Activated B cell treated with CpG ODN at 0.5 μM for 24 hours (primary cell): ENCODE measurements at regions of chr3 and their contacts with region 1.

Region 1: GRCh38 chr3:106255870-106256248 is 387.0 kb upstream of the CBLB start:
- DNase-seq: peak; percentile 56
- ATAC-seq: peak; percentile 96
- H3K4me3 Mint-ChIP-seq: peak overlapping the region; percentile 86
- H3K27ac Mint-ChIP-seq: peak overlapping the region; percentile 86
- H3K4me1 Mint-ChIP-seq: peaks cover 42% of the 10 kb centered on the region
- H3K27me3 Mint-ChIP-seq: no peaks in the 10 kb centered on the region
- CTCF ChIP-seq: no peak

Region 2: DNA sequence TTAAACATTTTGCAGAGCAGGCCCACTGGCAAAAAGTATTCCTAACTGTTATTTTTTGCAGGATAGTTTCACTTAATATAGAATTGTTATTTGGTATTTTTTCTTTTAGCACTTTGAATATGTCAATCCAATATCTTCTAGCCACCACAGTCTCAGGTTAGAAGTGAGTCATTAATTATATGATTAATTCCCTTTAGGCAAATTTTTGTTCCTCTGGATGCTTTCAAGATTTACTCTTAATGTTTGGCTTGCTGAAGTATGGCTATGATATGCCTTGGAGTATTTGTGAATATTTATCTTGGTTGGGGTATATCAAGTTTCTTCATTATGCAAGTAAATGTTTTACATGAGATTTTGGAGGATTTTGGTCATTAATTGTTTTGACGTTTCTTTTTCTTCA is 1041.3 kb before region 1 on chr3:
- CTCF ChIA-PET with region 1: no interaction called
- POLR2A ChIA-PET with region 1: no interaction called
- intact Hi-C with region 1: no loop called
- DNase-seq: no peak
- ATAC-seq: no peak
- H3K4me3 Mint-ChIP-seq: no peak overlapping the region
- H3K27ac Mint-ChIP-seq: no peak overlapping the region
- H3K4me1 Mint-ChIP-seq: no peaks in the 10 kb centered on the region
- H3K27me3 Mint-ChIP-seq: peaks cover 5% of the 10 kb centered on the region
- CTCF ChIP-seq: no peak

Region 3: GRCh38 chr3:105722943-105723556 is 532.8 kb before region 1 on chr3:
- CTCF ChIA-PET with region 1: no interaction called
- POLR2A ChIA-PET with region 1: no interaction called
- intact Hi-C with region 1: loop called (anchors 1 kb)
- DNase-seq: no peak
- ATAC-seq: peak; percentile 93
- H3K4me3 Mint-ChIP-seq: peak overlapping the region; percentile 66
- H3K27ac Mint-ChIP-seq: peak overlapping the region; percentile 88
- H3K4me1 Mint-ChIP-seq: peaks cover 19% of the 10 kb centered on the region
- H3K27me3 Mint-ChIP-seq: no peaks in the 10 kb centered on the region
- CTCF ChIP-seq: no peak

Region 4: DNA sequence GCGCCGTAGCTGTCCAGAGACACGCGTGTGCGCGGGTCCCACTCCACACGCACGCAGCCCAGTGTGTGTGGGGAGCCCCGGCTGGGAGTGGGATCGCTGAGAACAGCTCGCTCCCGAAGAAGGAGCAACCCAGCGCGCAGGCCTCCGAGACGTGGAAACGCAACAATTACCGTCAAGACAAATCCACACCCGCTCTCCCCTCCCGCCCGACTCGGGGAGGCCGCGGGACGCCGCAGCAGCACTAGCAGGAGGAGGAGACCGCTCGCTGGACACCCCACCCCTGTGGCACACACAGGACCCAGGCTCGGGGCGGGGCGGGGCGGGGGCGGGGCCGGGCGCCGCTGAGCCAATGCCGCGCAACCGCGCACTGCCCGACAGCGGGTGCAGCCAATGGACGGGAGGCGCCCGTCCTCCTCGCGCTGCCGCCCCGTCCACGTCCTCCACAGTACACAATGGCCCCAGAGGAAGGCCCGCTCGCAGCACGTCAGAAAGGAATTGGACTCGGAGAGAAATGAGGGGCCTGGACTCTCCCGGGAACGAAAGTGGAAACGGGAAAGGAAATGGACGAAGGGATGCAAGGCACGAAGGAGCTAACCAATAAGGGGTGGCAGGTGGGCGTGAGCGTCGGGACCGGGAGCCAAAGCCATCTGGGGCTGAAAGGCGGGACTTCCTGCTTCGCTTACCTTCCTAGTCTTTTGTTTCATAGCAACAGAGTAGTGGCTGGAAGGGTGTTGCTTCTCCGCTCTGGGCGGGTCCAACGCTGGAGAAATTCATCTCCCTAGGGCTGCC is 386.9 kb before region 1 on chr3 and contains the start of gene CBLB:
- CTCF ChIA-PET with region 1: no interaction called
- POLR2A ChIA-PET with region 1: interaction called, 3 read pairs
- intact Hi-C with region 1: loop called (anchors 5 kb)
- DNase-seq: peak; percentile 78
- ATAC-seq: peak; percentile 93
- H3K4me3 Mint-ChIP-seq: peak within 1 kb of the TSS; percentile 100
- H3K27ac Mint-ChIP-seq: peak within 1 kb of the TSS; percentile 99
- H3K4me1 Mint-ChIP-seq: peaks cover 53% of the 10 kb centered on the region
- H3K27me3 Mint-ChIP-seq: no peaks in the 10 kb centered on the region
- CTCF ChIP-seq: no peak
- total RNA-seq, gene CBLB: 69.2 and 78.1 TPM in 2 replicates

Region 5: DNA sequence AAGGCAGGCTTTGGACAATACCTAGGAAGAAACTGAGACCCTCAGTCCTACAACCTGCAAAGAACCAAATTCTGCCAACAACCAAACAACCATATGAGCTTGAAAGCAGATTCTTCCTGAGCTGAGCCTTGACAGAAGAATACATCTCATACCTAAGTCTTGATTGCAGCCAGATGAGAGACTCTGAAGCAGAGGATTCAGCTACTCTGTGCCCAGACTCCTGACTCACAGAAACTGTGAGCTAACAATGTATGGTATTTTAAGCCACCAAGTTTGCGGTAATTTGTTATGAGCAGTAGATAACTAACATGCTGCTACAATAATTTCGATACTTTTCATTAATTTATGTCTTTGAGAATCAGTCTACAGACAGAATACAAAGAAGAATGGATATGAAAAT is 62.0 kb before region 1 on chr3:
- CTCF ChIA-PET with region 1: no interaction called
- POLR2A ChIA-PET with region 1: no interaction called
- intact Hi-C with region 1: no loop called
- DNase-seq: no peak
- ATAC-seq: no peak
- H3K4me3 Mint-ChIP-seq: no peak overlapping the region
- H3K27ac Mint-ChIP-seq: no peak overlapping the region
- H3K4me1 Mint-ChIP-seq: no peaks in the 10 kb centered on the region
- H3K27me3 Mint-ChIP-seq: no peaks in the 10 kb centered on the region
- CTCF ChIP-seq: no peak

Region 6: GRCh38 chr3:106206146-106206545 is 49.7 kb before region 1 on chr3:
- CTCF ChIA-PET with region 1: no interaction called
- POLR2A ChIA-PET with region 1: interaction called, 5 read pairs
- intact Hi-C with region 1: loop called (anchors 2 kb)
- DNase-seq: no peak
- ATAC-seq: peak; percentile 78
- H3K4me3 Mint-ChIP-seq: peak overlapping the region; percentile 25
- H3K27ac Mint-ChIP-seq: no peak overlapping the region
- H3K4me1 Mint-ChIP-seq: peaks cover 33% of the 10 kb centered on the region
- H3K27me3 Mint-ChIP-seq: no peaks in the 10 kb centered on the region
- CTCF ChIP-seq: no peak

Region 7: DNA sequence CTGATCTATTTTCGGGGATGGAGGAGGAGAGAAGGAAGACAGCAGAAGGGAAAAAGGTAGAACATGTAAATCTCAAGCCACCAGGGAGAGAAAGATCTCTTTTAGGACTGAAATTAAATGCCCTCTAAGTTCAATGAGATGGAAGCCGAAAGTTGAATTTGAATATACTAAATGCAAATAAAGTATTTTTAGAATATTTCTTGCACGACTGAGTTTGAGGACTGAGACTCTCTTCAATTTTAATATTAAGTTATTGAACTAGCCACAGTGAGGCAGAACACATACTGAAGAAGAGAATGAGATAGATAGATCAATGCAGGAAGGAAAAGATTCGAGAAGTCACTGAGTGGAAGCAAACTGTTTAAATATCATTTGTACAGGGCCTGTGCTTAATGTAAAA is 12.8 kb after region 1 on chr3:
- CTCF ChIA-PET with region 1: no interaction called
- POLR2A ChIA-PET with region 1: interaction called, 3 read pairs
- intact Hi-C with region 1: loop called (anchors 1 kb)
- DNase-seq: no peak
- ATAC-seq: peak; percentile 50
- H3K4me3 Mint-ChIP-seq: peak overlapping the region; percentile 55
- H3K27ac Mint-ChIP-seq: peak overlapping the region; percentile 60
- H3K4me1 Mint-ChIP-seq: peaks cover 46% of the 10 kb centered on the region
- H3K27me3 Mint-ChIP-seq: no peaks in the 10 kb centered on the region
- CTCF ChIP-seq: no peak